ENCODE measurements at regions of chr12 and their contacts with region 1.

Region 1: GRCh38 chr12:54379401-54380201 is 4.9 kb downstream of the ZNF385A start:
- DNase-seq: peak; percentile 94
- H3K4me3 Mint-ChIP-seq: peak overlapping the region; percentile 22
- H3K27ac Mint-ChIP-seq: no peak overlapping the region
- H3K4me1 Mint-ChIP-seq: peaks cover 10% of the 10 kb centered on the region
- H3K27me3 Mint-ChIP-seq: no peaks in the 10 kb centered on the region

Region 2: DNA sequence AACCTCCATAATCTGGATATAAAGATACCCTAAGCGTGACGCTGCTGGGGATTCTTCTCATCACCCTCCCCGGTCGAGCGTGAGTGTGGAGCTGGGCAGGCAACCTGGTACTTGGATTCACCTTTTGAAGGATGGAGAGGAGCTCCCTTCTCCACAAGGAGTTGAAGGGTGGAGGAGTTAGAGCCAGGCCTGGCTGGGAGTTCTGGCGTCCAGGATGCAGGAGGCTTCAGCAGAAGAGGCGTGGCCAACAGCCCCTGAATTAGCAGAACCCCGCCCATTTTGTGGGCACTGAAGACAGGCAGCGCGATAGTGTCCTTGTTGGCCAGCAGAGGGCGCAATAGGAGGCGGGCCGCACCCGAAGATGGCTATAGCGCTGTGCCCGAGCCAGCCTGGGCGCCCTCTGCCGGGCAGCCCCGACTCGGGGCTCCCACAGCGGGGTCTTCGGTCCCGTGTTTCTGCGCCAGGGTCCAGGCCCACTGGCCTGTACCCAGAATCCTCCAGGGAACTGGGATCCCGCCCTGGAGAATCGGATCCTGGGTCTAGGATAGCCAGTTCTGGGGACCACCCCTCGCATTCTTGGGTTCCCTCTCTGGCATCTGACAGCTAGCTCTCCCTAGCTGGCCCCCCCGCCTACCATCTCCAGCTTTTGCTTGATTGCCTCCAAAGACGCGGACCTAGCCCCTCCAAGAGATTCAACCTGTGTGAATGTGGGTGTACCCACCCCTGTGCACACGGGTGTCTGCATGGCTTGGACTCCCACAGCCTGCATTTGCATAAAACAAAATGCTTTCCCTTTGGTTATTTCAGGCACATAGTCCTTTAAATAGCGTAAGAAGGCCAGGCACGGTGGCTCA is 164.8 kb before region 1 on chr12:
- CTCF ChIA-PET with region 1: interaction called, 32 read pairs
- POLR2A ChIA-PET with region 1: no interaction called
- intact Hi-C with region 1: no loop called
- DNase-seq: peak; percentile 94
- H3K4me3 Mint-ChIP-seq: peak overlapping the region; percentile 70
- H3K27ac Mint-ChIP-seq: no peak overlapping the region
- H3K4me1 Mint-ChIP-seq: peaks cover 20% of the 10 kb centered on the region
- H3K27me3 Mint-ChIP-seq: no peaks in the 10 kb centered on the region

Region 3: GRCh38 chr12:54259194-54260011 is 120.2 kb before region 1 on chr12:
- CTCF ChIA-PET with region 1: interaction called, 10 read pairs
- POLR2A ChIA-PET with region 1: no interaction called
- intact Hi-C with region 1: no loop called
- DNase-seq: peak; percentile 38
- H3K4me3 Mint-ChIP-seq: no peak overlapping the region
- H3K27ac Mint-ChIP-seq: no peak overlapping the region
- H3K4me1 Mint-ChIP-seq: peaks cover 46% of the 10 kb centered on the region
- H3K27me3 Mint-ChIP-seq: no peaks in the 10 kb centered on the region

Region 4: GRCh38 chr12:54294152-54294952 is 85.2 kb before region 1 on chr12:
- CTCF ChIA-PET with region 1: interaction called, 101 read pairs
- POLR2A ChIA-PET with region 1: no interaction called
- intact Hi-C with region 1: no loop called
- DNase-seq: peak; percentile 79
- H3K4me3 Mint-ChIP-seq: no peak overlapping the region
- H3K27ac Mint-ChIP-seq: no peak overlapping the region
- H3K4me1 Mint-ChIP-seq: peaks cover 3% of the 10 kb centered on the region
- H3K27me3 Mint-ChIP-seq: peaks cover 2% of the 10 kb centered on the region

Region 5: GRCh38 chr12:54337280-54337842 is 42.2 kb before region 1 on chr12:
- CTCF ChIA-PET with region 1: interaction called, 25 read pairs
- POLR2A ChIA-PET with region 1: interaction called, 4 read pairs
- intact Hi-C with region 1: no loop called
- DNase-seq: no peak
- H3K4me3 Mint-ChIP-seq: no peak overlapping the region
- H3K27ac Mint-ChIP-seq: no peak overlapping the region
- H3K4me1 Mint-ChIP-seq: peaks cover 18% of the 10 kb centered on the region
- H3K27me3 Mint-ChIP-seq: no peaks in the 10 kb centered on the region

Region 6: GRCh38 chr12:54411391-54412241 is 32.0 kb after region 1 on chr12:
- CTCF ChIA-PET with region 1: interaction called, 18 read pairs
- POLR2A ChIA-PET with region 1: no interaction called
- intact Hi-C with region 1: no loop called
- DNase-seq: peak; percentile 77
- H3K4me3 Mint-ChIP-seq: no peak overlapping the region
- H3K27ac Mint-ChIP-seq: peak overlapping the region; percentile 96
- H3K4me1 Mint-ChIP-seq: peaks cover 63% of the 10 kb centered on the region
- H3K27me3 Mint-ChIP-seq: no peaks in the 10 kb centered on the region

Region 7: GRCh38 chr12:54549774-54550451 is 170.3 kb after region 1 on chr12:
- CTCF ChIA-PET with region 1: no interaction called
- POLR2A ChIA-PET with region 1: no interaction called
- intact Hi-C with region 1: no loop called
- DNase-seq: peak; percentile 58
- H3K4me3 Mint-ChIP-seq: peak overlapping the region; percentile 73
- H3K27ac Mint-ChIP-seq: no peak overlapping the region
- H3K4me1 Mint-ChIP-seq: peaks cover 37% of the 10 kb centered on the region
- H3K27me3 Mint-ChIP-seq: no peaks in the 10 kb centered on the region

Region 8: GRCh38 chr12:54616933-54617680 is 237.5 kb after region 1 on chr12:
- CTCF ChIA-PET with region 1: no interaction called
- POLR2A ChIA-PET with region 1: no interaction called
- intact Hi-C with region 1: no loop called
- DNase-seq: no peak
- H3K4me3 Mint-ChIP-seq: no peak overlapping the region
- H3K27ac Mint-ChIP-seq: no peak overlapping the region
- H3K4me1 Mint-ChIP-seq: no peaks in the 10 kb centered on the region
- H3K27me3 Mint-ChIP-seq: peaks cover 36% of the 10 kb centered on the region